ENCODE measurements at regions of chr9 and their contacts with region 1.

Region 1: GRCh38 chr9:137618105-137619067 is at the start of gene EHMT1:
- DNase-seq: peak; percentile 46 to 95
- H3K4me3 ChIP-seq: peak within 1 kb of the TSS; percentile 83 to 99 (median 92)
- H3K27ac ChIP-seq: peak within 1 kb of the TSS; percentile 84
- H3K4me1 ChIP-seq: peaks cover 0 to 9% (median 5%) of the 10 kb centered on the region in 4 experiments; a peak in 5 of 7 replicates
- H3K27me3 ChIP-seq: no peaks in the 10 kb centered on the region
- CTCF ChIP-seq: no peak
- EP300 ChIP-seq: no peak
- POLR2A ChIP-seq: no peak; a peak in 2 of 3 replicates
- RAD21 ChIP-seq: no peak
- total RNA-seq, gene EHMT1: 163 and 171 TPM in 2 replicates

Region 2: DNA sequence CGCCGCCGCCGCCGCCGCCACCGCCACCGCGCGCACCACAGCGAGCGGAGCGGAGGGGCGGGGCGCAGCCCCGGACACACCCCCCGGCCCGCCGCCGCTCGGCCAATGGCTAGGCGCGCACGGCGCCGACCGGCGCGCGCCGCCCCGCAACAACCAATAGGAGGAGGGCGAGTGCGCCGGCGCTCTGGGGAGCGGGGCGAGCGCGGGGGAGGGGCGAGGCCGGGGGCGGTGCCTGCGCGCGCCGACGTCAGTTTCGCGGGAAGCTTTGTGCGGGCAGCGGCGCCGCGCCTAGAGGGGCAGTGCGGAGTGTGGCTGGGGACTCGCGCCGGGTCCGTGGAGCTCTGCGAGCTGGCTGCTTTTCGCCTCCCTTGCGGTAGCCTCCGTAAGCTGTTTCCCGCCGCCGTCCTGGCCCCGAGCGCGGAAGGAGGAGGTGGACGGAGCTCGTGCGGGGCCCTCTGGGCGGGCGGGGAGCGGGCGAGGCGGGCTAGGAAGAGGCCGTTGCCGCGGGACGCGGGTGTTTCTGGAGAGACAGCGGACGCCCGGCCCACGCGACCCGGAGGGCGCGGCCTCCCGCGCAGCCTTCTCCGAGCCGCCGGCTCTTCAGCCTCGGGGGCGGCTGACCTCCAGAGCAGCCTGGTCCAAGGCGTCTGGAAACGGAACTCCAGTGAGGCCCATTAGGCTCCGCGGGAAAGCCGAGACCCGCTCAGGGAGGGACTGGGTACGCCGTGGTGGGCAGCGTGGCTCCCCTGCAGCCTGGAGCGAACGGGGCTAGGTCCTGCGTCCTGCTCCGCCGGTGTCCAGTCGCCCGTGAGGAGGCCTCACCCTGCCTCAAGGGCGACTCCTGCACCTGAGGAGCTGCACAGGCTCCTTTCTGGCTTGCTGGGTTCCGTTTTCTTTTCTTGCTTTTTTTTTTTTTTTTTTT is 27.7 kb before region 1 on chr9 and contains the start of gene ZMYND19:
- CTCF ChIA-PET with region 1: interaction called, 3 read pairs
- POLR2A ChIA-PET with region 1: interaction called, 16 read pairs
- DNase-seq: peak in 1 of 2 experiments; percentile 94
- H3K4me3 ChIP-seq: peak within 1 kb of the TSS; percentile 82 to 96 (median 86)
- H3K27ac ChIP-seq: peak within 1 kb of the TSS; percentile 45; the same call in 1 of the 2 replicates
- H3K4me1 ChIP-seq: peaks cover 0 to 7% (median 5%) of the 10 kb centered on the region in 4 experiments; a peak in 5 of 7 replicates
- H3K27me3 ChIP-seq: no peaks in the 10 kb centered on the region; a peak in 1 of 7 replicates
- CTCF ChIP-seq: no peak
- EP300 ChIP-seq: no peak
- POLR2A ChIP-seq: peak in 1 of 2 experiments; percentile 56; a peak in 2 of 3 replicates
- RAD21 ChIP-seq: no peak
- total RNA-seq, gene ZMYND19: 58.5 and 58.7 TPM in 2 replicates

Region 3: GRCh38 chr9:137605121-137606004 is 13.0 kb before region 1 on chr9 and contains the start of gene ARRDC1:
- CTCF ChIA-PET with region 1: interaction called, 7 read pairs
- POLR2A ChIA-PET with region 1: interaction called, 25 read pairs
- DNase-seq: peak; percentile 86 to 90
- H3K4me3 ChIP-seq: peak within 1 kb of the TSS; percentile 74 to 85 (median 84)
- H3K27ac ChIP-seq: no peak within 1 kb of the TSS; the same call in 1 of the 2 replicates
- H3K4me1 ChIP-seq: peaks cover 0 to 17% (median 8%) of the 10 kb centered on the region in 4 experiments; a peak in 6 of 7 replicates
- H3K27me3 ChIP-seq: peaks cover 0 to 9% (median 2%) of the 10 kb centered on the region in 4 experiments; a peak in 2 of 7 replicates
- CTCF ChIP-seq: no peak
- EP300 ChIP-seq: no peak
- POLR2A ChIP-seq: peak in 1 of 2 experiments; percentile 51; a peak in 2 of 3 replicates
- RAD21 ChIP-seq: no peak
- total RNA-seq, gene ARRDC1: 22.0 and 22.2 TPM in 2 replicates

Region 4: GRCh38 chr9:137665697-137666510 is 47.5 kb after region 1 on chr9:
- CTCF ChIA-PET with region 1: interaction called, 15 read pairs
- POLR2A ChIA-PET with region 1: interaction called, 24 read pairs
- DNase-seq: no peak
- H3K4me3 ChIP-seq: peak overlapping the region in 2 of 4 experiments; percentile 10 to 41; a peak in 3 of 8 replicates
- H3K27ac ChIP-seq: peak overlapping the region; percentile 87
- H3K4me1 ChIP-seq: peaks cover 26 to 61% (median 45%) of the 10 kb centered on the region in 4 experiments
- H3K27me3 ChIP-seq: no peaks in the 10 kb centered on the region
- CTCF ChIP-seq: peak in 2 of 3 experiments; percentile 16 to 23; a peak in 2 of 4 replicates
- EP300 ChIP-seq: no peak
- POLR2A ChIP-seq: no peak
- RAD21 ChIP-seq: no peak

Region 5: DNA sequence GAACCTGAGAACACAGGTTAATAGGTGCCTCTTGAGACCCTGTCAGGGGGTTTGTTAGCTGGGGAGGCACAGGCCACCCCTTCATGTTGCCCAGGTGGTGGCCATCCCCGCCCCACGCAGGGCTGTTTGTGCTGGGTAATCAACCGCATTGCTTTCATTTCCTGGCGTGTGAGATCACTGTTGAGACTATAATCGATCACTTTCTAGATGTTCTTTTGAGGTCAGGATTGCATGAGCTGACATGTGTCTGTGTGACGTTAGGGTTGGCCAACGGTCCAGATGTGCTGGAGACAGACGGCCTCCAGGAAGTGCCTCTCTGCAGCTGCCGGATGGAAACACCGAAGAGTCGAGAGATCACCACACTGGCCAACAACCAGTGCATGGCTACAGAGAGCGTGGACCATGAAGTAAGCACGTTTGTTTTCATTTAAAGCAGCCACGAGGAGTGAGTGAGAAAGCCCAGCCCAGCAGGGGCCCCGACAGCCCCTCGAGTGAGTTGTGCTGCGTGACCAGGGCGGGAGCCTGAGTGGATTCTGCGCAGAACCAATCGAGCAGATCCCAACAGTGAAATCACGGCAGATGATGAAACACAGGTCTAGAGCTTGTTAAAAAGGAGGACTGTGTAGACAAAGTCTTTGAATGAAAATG is 144.2 kb after region 1 on chr9:
- CTCF ChIA-PET with region 1: no interaction called
- POLR2A ChIA-PET with region 1: no interaction called
- DNase-seq: no peak
- H3K4me3 ChIP-seq: no peak overlapping the region
- H3K27ac ChIP-seq: no peak overlapping the region
- H3K4me1 ChIP-seq: no peaks in the 10 kb centered on the region; a peak in 1 of 7 replicates
- H3K27me3 ChIP-seq: no peaks in the 10 kb centered on the region
- CTCF ChIP-seq: no peak
- EP300 ChIP-seq: no peak
- POLR2A ChIP-seq: no peak
- RAD21 ChIP-seq: no peak

Measured in H1 (cell line).